ENCODE measurements at regions of chr3 and their contacts with region 1.

Region 1: DNA sequence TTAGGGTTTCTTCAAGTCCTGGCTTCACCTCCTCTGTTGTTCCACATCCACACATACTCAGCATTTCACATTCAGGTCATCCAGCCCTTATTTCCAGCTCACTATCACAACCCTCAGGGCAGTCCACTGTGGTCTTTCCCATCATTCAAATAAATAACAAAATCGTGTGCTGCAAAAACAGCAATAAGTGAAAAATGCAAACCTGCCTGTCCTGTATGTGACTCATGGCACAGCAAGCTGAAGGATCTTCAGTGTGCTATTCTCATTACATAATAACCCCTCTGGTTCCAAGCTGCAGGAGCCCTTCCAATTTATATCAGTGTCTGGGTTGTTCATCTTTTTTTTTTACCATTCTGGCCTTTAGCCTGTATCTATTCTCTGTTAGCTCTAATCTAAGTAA is 185.3 kb upstream of the UBE2E2 start:
- H3K4me3 Mint-ChIP-seq: no peak overlapping the region
- H3K27ac Mint-ChIP-seq: no peak overlapping the region
- H3K4me1 Mint-ChIP-seq: peaks cover 5% of the 10 kb centered on the region
- H3K27me3 Mint-ChIP-seq: peaks cover 5% of the 10 kb centered on the region

Region 2: DNA sequence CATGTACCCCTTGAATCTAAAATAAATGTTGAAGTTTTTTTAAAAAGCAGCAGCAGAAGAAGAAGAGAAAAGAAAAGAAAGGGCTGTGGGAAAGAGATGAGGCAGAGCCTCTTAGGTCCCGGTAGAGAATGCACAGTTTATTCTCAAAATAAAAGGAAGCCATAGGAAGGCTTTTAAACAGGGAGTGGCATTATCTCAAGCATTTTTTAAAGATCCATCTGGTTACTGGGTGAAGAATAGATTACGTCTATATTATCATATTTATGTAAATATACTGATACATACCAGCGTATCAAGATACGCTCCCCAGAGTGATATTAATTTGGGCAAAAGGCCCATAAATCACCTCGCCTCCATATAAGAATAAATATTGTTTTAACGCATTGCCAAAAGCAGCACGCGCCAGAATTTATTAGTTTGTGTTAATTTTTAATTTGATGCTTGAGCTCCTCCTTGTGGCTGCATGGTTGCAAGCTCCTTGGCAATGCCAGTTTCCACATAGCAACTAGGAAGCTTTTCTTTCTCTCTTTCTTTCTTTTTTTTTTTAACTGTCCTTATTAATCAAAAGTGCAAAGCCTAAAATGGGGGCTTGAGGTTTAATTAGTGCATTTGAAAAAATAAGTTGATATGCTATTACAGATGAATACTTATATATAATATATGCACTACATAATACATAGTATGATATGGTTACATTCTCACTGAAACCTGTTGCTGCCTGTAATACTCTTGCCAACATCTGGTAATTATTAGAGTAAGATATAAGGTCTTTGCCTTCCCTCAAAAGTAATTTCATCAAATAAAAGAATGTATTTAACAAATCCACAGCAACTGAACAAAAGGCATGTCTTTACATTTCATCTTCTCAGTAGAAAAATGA is 57.4 kb before region 1 on chr3:
- intact Hi-C with region 1: no loop called
- H3K4me3 Mint-ChIP-seq: no peak overlapping the region
- H3K27ac Mint-ChIP-seq: peak overlapping the region; percentile 61
- H3K4me1 Mint-ChIP-seq: peaks cover 14% of the 10 kb centered on the region
- H3K27me3 Mint-ChIP-seq: peaks cover 3% of the 10 kb centered on the region

Region 3: DNA sequence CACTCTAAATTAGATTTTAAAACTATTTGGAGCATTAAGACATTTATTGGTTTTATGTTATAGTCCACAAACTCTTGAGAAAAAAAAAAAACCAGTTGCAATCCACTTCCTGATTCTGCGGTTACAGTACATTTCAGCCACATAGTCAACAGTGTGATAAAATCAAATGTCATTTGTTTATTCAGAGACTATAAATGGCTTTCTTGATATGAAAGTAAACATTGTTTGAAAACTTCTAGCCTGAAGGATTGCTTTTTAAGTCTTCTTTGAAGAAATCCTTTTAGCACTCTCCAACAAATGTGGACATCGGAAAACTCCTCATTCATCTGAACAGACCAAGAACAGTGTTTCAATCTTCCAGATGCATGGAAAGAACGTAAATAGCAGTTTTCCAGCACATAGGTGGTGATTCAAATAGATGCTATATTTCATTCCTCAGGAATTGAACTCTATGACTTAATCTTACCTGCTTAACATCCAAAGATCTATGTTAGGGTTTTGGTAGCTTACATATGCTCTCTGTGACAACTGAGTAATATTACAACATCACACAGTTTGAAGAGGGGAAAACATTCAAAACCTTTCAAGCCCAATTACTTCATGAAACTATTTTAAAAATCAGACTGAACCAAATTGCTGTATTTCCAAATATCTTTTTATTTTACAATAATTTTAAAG is 97.6 kb after region 1 on chr3:
- intact Hi-C with region 1: loop called (anchors 1 kb)
- H3K4me3 Mint-ChIP-seq: no peak overlapping the region
- H3K27ac Mint-ChIP-seq: no peak overlapping the region
- H3K4me1 Mint-ChIP-seq: peaks cover 15% of the 10 kb centered on the region
- H3K27me3 Mint-ChIP-seq: peaks cover 10% of the 10 kb centered on the region